Mammary epithelial cell (primary cell): ENCODE measurements at regions of chr1 and their contacts with region 1.

Region 1: DNA sequence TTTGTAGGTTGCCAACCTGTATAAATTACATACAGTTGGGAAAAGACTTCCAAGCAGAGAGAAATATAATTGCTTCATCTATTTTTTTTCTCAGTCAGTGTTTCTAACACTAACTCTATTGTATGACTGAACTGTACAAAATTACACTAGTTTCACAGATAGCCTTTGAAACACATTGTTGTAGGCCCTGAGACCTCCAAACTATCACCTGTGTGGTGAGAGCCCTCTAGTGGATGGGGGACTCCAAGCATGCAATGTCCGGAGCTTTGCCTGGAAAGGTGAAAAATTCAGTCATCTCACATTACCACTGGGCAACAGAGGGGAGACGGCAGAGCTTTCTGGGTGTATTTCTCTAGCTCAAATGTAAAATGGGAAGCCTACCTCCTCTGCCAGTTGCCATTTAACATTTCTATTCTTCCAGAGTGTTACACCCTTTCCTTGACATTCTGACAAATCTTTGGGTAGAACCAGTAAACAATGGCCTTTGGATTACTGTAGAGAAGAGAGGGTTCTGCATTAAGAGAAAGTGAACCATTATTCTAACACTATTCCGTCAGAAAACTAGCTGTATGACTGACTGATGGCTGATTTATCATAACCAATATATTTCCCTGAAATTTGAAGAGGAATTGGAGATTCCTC is 212.2 kb downstream of the LYPLAL1 start:
- DNase-seq: peak; percentile 48
- H3K4me3 ChIP-seq: no peak overlapping the region
- H3K27ac ChIP-seq: no peak overlapping the region
- H3K4me1 ChIP-seq: no peaks in the 10 kb centered on the region
- H3K27me3 ChIP-seq: no peaks in the 10 kb centered on the region
- CTCF ChIP-seq: peak; percentile 95 to 96

Region 2: DNA sequence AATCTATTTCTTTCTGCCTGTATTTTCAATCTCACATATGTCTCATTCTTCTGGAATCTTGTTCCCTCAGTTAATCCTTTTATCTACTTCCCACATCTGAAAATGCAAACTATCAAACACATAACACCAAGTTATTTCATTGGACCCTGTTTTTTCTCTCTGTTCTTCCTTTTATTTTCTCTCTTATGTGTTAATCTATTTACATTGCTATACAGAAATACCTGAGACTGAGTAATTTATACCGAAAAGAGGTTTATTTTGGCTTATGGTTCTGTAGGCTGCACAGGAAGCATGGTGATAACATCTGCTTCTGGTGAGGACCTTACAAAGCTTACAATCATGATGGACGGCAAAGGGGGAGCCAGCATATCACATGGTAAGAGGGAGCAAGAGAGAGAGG is 793.2 kb before region 1 on chr1:
- CTCF ChIA-PET with region 1: no interaction called
- dilution Hi-C with region 1: no loop called
- in situ Hi-C with region 1: no loop called
- intact Hi-C with region 1: loop called (anchors 5 kb)
- DNase-seq: peak; percentile 57
- H3K4me3 ChIP-seq: no peak overlapping the region
- H3K27ac ChIP-seq: no peak overlapping the region
- H3K4me1 ChIP-seq: peaks cover 8% of the 10 kb centered on the region
- H3K27me3 ChIP-seq: no peaks in the 10 kb centered on the region
- CTCF ChIP-seq: no peak

Region 3: DNA sequence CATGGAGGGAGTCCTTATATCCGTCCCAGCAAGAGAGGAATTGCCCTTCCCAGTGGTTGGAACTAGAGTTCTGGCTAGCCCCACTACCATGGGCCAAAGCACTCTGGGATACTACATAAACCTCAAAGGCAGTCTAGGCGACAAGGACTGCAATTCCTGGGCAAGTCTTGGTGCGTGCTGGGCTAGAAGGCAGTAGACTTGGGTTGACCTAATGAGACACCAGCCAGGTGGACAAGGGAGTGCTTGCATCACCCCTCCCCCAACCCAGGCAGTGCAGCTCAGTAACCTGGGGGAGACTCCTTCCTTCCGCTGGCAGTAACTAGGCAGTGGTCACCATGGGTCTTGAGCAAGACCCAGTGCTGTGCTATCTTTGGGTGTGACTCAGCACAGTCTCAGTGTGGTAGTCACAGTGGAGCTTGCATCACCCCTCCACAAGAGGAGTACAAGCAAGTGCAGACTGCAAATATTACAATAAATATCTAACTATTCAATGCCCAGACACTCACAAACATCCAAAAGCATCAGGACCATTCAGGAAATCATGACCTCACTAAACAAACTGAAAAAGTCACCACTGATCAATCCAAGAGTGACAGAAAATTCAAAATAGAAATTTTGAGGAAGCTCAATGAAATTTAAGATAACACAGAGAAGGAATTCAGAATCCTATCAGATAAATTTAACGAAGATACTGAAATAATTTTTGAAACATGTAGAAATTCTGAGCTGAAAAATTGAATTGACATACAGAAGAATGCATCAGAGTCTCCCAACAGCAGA is 296.9 kb before region 1 on chr1:
- CTCF ChIA-PET with region 1: no interaction called
- dilution Hi-C with region 1: no loop called
- in situ Hi-C with region 1: no loop called
- intact Hi-C with region 1: loop called (anchors 10 kb)
- DNase-seq: peak; percentile 89
- H3K4me3 ChIP-seq: no peak overlapping the region
- H3K27ac ChIP-seq: peak overlapping the region; percentile 6
- H3K4me1 ChIP-seq: peaks cover 13% of the 10 kb centered on the region
- H3K27me3 ChIP-seq: no peaks in the 10 kb centered on the region
- CTCF ChIP-seq: no peak

Region 4: GRCh38 chr1:219304227-219305226 is 81.4 kb before region 1 on chr1:
- CTCF ChIA-PET with region 1: no interaction called
- dilution Hi-C with region 1: no loop called
- in situ Hi-C with region 1: no loop called
- intact Hi-C with region 1: loop called (anchors 1 kb)
- DNase-seq: peak; percentile 43
- H3K4me3 ChIP-seq: no peak overlapping the region
- H3K27ac ChIP-seq: no peak overlapping the region
- H3K4me1 ChIP-seq: peaks cover 7% of the 10 kb centered on the region
- H3K27me3 ChIP-seq: peaks cover 32% of the 10 kb centered on the region
- CTCF ChIP-seq: peak; percentile 23 to 49

Region 5: DNA sequence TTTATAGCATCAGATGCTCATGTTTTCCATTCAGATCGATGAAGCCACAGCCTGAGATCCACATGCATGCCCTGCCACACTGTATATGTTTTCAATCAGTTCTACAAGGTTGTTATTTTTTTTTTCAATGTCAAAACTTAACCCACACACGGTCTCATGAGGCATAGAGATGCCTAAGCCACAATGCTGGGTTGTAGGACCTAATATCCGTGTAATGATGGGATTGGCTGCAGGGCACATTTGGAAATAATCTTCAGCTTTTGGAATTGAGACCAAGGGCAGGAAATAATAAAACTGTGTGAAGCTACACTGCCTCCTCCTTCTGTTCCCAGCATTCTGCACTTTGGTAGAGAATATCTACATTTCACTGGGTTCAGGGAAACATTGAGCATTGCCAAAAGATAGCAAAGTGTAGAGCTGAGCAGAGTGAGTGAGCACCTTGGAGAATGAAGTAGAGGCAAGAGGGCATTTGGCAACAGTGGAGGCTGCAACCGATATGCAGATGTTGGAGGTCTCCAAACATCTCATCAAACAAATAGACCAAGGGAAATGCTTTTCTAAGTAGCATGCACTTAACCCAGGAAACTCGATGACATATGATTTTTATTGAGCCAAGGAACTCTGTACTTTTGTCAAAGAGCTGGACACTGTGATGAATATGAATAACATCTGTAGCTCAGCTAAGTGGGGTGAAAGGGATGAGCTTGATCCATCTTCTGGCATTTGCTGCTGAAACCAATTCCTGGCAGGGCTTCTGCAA is 35.6 kb before region 1 on chr1:
- CTCF ChIA-PET with region 1: no interaction called
- dilution Hi-C with region 1: no loop called
- in situ Hi-C with region 1: no loop called
- intact Hi-C with region 1: no loop called
- DNase-seq: no peak
- H3K4me3 ChIP-seq: no peak overlapping the region
- H3K27ac ChIP-seq: no peak overlapping the region
- H3K4me1 ChIP-seq: no peaks in the 10 kb centered on the region
- H3K27me3 ChIP-seq: peaks cover 30% of the 10 kb centered on the region
- CTCF ChIP-seq: no peak

Region 6: DNA sequence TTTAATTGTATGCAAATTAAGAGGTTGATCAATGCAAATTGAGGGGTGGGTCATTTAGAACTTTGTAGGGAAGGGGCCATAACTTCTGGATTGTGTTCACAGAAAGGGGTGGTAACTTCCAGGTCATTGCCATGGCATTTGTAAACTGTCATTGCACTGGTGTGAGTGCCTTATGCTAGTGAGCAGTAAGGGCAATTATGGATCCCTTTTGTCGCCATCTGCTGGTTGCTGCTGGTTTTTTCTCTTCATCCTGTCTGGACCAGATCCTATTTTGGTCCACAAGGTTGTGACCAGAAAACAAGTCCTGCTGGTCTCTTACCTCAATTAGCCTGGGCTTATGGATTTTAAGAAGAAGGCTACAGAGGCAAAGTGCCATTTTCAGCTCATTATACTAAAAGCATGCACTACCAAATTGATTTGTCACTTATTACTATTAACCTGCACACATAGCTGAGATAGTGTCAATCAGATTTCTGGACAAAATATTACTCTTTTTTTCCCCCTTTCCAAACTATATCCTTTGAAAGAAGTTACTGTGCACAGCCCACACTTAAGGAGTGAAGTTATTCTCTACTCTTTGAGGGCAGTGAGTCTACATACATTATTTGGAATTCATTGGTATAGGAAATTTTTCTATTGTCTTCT is 30.8 kb after region 1 on chr1:
- CTCF ChIA-PET with region 1: no interaction called
- dilution Hi-C with region 1: no loop called
- in situ Hi-C with region 1: no loop called
- intact Hi-C with region 1: no loop called
- DNase-seq: peak; percentile 40
- H3K4me3 ChIP-seq: no peak overlapping the region
- H3K27ac ChIP-seq: no peak overlapping the region
- H3K4me1 ChIP-seq: no peaks in the 10 kb centered on the region
- H3K27me3 ChIP-seq: peaks cover 3% of the 10 kb centered on the region
- CTCF ChIP-seq: peak; percentile 70 to 78

Region 7: GRCh38 chr1:219805193-219805592 is 419.3 kb after region 1 on chr1:
- CTCF ChIA-PET with region 1: no interaction called
- dilution Hi-C with region 1: no loop called
- in situ Hi-C with region 1: no loop called
- intact Hi-C with region 1: loop called (anchors 2 kb)
- DNase-seq: no peak
- H3K4me3 ChIP-seq: no peak overlapping the region
- H3K27ac ChIP-seq: no peak overlapping the region
- H3K4me1 ChIP-seq: no peaks in the 10 kb centered on the region
- H3K27me3 ChIP-seq: peaks cover 4% of the 10 kb centered on the region
- CTCF ChIP-seq: peak in 1 of 2 donors; percentile 29